ENCODE measurements at regions of chr10 and their contacts with region 1.

Region 1: DNA sequence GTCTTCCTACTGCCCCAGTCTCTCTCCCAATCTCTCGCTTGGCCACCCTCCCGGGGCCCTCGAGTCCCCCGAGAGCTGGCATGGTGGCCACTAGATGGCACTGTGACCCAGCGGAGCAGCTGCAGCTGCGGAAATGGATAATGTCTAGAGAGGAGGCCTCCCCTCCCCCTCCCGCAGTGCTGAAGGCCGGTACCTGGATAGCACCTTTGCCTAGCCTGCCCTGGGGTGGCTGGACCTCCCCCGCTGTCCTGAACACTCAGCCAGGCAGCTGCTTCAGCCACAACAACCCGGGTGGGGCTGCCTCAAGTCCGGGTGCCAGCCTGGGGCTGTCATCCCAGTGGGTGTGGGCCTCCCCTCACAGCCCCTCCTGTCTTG is 65.2 kb downstream of the GOLGA7B start:
- DNase-seq: peak; percentile 68 to 96 (median 87)

Region 2: GRCh38 chr10:97943294-97943693 is 28.5 kb after region 1 on chr10:
- intact Hi-C with region 1: no loop called
- DNase-seq: no peak

Region 3: DNA sequence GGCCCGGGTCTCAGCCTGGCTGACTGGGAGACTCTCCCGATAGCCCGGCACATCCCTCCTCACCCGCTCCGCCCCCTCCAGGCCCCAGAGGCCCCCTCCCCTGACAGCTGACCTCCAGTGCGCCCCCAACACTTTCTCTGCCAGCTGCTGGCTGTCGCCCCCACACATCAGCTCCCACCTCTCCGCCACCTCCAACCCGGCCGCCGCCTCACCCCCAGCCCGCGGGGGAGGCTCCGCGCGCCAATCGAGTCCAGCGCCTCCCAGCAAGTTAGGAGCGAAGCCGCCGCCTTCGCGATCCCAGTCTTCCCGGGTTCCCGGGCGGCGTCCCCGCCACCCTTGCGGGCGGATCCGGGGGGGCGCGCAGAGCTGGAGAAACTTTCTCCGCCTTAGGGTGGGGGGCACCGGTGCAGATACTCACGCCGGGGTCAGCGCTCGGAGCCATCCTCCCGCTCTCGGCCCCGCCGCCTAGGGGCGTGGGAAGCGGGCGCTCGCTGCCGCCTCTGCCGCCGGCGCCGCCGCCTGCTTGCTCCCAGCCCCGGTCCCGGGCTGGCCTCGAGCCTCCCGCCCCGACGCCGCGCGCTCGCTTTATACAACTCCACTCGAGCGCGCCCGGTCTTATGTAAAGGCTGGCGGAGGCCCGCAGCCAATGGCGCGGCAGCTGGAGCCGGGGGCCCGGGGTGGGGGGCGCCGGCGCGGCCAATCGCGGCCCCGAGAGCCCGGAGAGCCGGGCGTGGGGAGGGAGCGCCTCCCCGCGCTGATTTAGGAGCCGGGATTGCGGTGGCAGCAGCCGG is 115.4 kb after region 1 on chr10 and contains the start of gene CRTAC1:
- intact Hi-C with region 1: loop called (anchors 1 kb)
- DNase-seq: peak; percentile 61 to 98 (median 85)

Region 4: DNA sequence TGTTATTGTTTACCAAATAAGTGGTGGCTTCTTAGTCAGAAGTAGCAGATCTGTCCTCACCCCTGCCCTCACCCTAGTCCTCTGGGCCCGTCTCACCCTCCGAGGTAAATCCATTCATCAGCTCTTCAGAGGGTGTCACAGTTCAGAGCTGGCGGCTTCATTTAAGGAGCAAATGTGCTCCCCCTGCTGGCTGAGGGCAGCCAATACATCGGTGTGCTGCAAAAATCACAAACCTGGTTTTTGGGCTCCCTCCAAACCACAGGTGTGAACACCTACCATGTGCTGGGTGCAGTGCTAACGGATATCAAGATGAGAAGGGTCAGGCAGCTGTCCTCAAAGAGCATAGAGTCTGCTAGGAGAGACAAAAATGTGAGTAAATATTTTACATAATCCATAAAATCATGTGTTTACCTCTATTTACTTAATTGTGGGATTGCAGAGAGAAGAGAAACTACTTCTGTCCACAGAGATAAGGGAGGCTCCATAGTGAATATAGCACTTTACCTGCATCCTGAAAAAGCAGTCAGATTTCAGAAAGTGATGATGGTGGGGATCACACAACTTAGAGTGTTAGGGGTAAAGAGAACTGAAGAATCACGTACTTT is 131.1 kb after region 1 on chr10:
- intact Hi-C with region 1: loop called (anchors 1 kb)
- DNase-seq: peak; percentile 29 to 92 (median 56)

Region 5: GRCh38 chr10:98134431-98135221 is 219.8 kb after region 1 on chr10 and contains the start of gene R3HCC1L:
- intact Hi-C with region 1: loop called (anchors 10 kb)
- DNase-seq: peak; percentile 80 to 98 (median 89)

Region 6: GRCh38 chr10:98309366-98310355 is 394.8 kb after region 1 on chr10:
- intact Hi-C with region 1: loop called (anchors 10 kb)
- DNase-seq: peak; percentile 44 to 96 (median 74)

Region 7: GRCh38 chr10:98391578-98391991 is 476.8 kb after region 1 on chr10:
- intact Hi-C with region 1: loop called (anchors 5 kb)
- DNase-seq: peak in 4 of 10 donors; percentile 35 to 88 (median 51)

Measured in posterior cingulate gyrus (tissue), 11 donors.